IMR-90 (cell line): ENCODE measurements at regions of chr11 and their contacts with region 1.

Region 1: GRCh38 chr11:1262172-1263006 is 39.5 kb downstream of the MUC5B start:
- DNase-seq: peak; percentile 89
- ATAC-seq: peak; percentile 98
- H3K4me3 ChIP-seq: peak overlapping the region; percentile 35
- H3K27ac ChIP-seq: peak overlapping the region; percentile 5; the same call in 1 of the 2 replicates
- H3K4me1 ChIP-seq: peaks cover 11% of the 10 kb centered on the region
- H3K27me3 ChIP-seq: no peaks in the 10 kb centered on the region
- CTCF ChIP-seq: no peak
- POLR2A ChIP-seq: 0 out of 2 replicates have a peak, but pooled peaks have one; percentile 38
- RAD21 ChIP-seq: no peak

Region 2: GRCh38 chr11:1389103-1389931 is 126.9 kb after region 1 on chr11:
- CTCF ChIA-PET with region 1: interaction called, 6 read pairs
- POLR2A ChIA-PET with region 1: no interaction called
- dilution Hi-C with region 1: no loop called
- in situ Hi-C with region 1: no loop called
- intact Hi-C with region 1: loop called (anchors 5 kb)
- DNase-seq: peak; percentile 93
- ATAC-seq: peak; percentile 99
- H3K4me3 ChIP-seq: peak overlapping the region; percentile 62
- H3K27ac ChIP-seq: peak overlapping the region; percentile 50
- H3K4me1 ChIP-seq: no peaks in the 10 kb centered on the region; the same call in 1 of the 2 replicates
- H3K27me3 ChIP-seq: peaks cover 22% of the 10 kb centered on the region
- CTCF ChIP-seq: peak; percentile 27; the same call in 1 of the 2 replicates
- POLR2A ChIP-seq: no peak
- RAD21 ChIP-seq: peak; percentile 25; the same call in 1 of the 2 replicates